ENCODE measurements at regions of chr10 and their contacts with region 1.

Region 1: DNA sequence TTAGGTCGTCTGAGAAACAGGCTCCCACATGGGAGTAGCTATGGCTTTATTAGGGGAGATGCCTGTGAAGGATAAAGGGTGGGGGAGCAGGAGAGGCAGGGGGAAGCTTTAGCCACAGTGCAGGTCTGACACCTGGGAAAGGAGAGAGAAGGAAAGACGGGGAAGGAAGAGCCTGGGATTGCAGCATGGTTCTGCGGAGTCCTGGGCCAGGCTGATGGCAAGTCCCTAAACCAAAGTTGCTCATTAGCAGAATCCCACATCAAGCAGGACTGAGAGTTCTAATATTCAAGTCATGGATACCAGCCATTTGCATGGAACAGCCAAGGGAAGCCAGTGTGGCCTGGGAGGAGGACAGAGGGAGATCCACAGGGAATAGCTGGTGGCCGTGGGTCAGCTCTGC is 414.8 kb downstream of the RPS24 start:
- DNase-seq: no peak
- ATAC-seq: no peak
- H3K4me3 ChIP-seq: no peak overlapping the region
- H3K27ac ChIP-seq: no peak overlapping the region
- H3K4me1 ChIP-seq: no peaks in the 10 kb centered on the region
- CTCF ChIP-seq: no peak
- EP300 ChIP-seq: no peak
- POLR2A ChIP-seq: no peak
- RAD21 ChIP-seq: no peak

Region 2: GRCh38 chr10:78407009-78407711 is 41.3 kb before region 1 on chr10:
- CTCF ChIA-PET with region 1: no interaction called
- POLR2A ChIA-PET with region 1: no interaction called
- DNase-seq: peak; percentile 88 to 93
- ATAC-seq: peak; percentile 96 to 99
- H3K4me3 ChIP-seq: peak overlapping the region; percentile 44
- H3K27ac ChIP-seq: peak overlapping the region in 1 of 2 experiments; percentile 64; a peak in 3 of 6 replicates
- H3K4me1 ChIP-seq: peaks cover 14% of the 10 kb centered on the region; the same call in 2 of the 3 replicates
- CTCF ChIP-seq: no peak
- EP300 ChIP-seq: no peak
- POLR2A ChIP-seq: no peak
- RAD21 ChIP-seq: no peak

Region 3: DNA sequence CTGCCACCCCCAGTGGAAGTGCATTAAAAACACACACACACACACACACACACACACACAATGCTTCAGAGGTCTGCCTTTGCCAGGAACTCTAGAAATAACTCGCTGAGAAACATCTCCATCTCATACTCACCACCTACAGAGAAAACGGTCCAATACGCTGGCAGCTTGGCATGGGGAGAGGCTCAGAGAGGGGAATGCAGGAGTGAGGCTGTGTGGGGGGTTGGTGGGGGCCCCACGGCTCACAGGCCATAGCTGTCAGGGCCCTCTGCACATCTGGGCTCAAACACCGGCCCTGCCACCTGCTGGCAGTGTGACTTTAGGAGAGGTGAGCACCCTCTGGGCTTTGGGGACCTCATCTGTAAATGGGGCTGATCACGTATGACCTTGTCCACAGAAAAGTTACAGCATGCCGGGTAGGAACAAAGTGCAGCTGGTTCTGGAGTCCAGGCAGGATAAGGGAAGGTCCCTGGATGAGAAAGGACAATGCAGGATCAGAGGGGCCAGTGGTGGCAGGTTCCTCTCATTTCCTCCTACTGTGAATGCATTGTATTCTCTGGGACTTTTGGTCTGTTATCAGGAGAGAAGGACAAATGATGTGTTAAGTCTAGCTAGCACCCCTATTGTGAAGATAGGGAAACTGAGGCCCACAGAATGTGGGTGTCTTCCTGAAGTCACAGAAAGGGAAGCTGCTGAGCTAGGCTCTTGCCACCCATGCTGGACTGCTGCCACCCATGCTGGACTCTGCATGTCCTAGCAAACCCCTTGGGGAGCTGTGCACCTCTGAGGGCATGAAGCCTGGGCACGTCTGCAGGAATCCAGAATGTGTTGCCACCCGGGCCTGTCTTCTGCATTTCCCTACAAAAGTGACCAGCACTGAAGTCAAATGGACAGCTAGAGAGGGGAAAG is 10.2 kb before region 1 on chr10:
- CTCF ChIA-PET with region 1: interaction called, 12 read pairs
- POLR2A ChIA-PET with region 1: no interaction called
- DNase-seq: no peak
- ATAC-seq: peak; percentile 55 to 63; a peak in 5 of 6 replicates
- H3K4me3 ChIP-seq: no peak overlapping the region
- H3K27ac ChIP-seq: no peak overlapping the region
- H3K4me1 ChIP-seq: peaks cover 12% of the 10 kb centered on the region; the same call in 2 of the 3 replicates
- CTCF ChIP-seq: 0 out of 3 replicates have a peak, but pooled peaks have one; percentile 9
- EP300 ChIP-seq: no peak
- POLR2A ChIP-seq: no peak
- RAD21 ChIP-seq: peak; percentile 21 to 24; a peak in 1 of 5 replicates

Region 4: DNA sequence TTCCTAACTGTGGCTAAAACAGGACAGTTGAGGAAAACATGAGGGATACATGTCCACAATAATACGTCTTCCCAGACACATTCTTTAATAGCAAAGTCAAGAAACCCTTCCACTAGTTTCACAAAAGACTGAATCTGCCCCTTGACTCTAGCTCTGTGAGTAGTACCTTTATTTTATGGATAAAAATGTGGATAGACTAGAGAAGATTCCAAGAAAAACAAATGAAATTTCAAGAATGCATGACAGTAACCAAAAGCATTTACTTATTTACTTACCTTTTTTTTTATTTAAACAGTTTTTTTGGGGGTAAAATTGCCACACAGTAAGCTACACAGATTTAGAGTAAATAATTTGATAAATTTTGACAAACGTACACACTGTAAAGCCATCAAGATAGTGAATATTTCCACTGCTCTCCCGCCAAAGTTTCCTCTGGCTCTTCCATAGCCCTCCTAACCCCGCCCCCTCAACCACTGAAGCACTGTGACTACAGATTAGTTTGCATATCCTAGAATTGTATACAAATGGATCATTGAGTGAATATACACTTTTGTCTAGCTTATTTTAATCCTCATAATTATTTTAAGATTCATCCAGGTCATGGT is 199.9 kb after region 1 on chr10:
- CTCF ChIA-PET with region 1: no interaction called
- POLR2A ChIA-PET with region 1: no interaction called
- DNase-seq: no peak
- ATAC-seq: no peak
- H3K4me3 ChIP-seq: no peak overlapping the region
- H3K27ac ChIP-seq: no peak overlapping the region
- H3K4me1 ChIP-seq: peaks cover 11% of the 10 kb centered on the region; the same call in 2 of the 3 replicates
- CTCF ChIP-seq: no peak
- EP300 ChIP-seq: no peak
- POLR2A ChIP-seq: no peak
- RAD21 ChIP-seq: no peak

Measured in A549 (cell line).